PC-9 (cell line): ENCODE measurements at regions of chr3 and their contacts with region 1.

Region 1: DNA sequence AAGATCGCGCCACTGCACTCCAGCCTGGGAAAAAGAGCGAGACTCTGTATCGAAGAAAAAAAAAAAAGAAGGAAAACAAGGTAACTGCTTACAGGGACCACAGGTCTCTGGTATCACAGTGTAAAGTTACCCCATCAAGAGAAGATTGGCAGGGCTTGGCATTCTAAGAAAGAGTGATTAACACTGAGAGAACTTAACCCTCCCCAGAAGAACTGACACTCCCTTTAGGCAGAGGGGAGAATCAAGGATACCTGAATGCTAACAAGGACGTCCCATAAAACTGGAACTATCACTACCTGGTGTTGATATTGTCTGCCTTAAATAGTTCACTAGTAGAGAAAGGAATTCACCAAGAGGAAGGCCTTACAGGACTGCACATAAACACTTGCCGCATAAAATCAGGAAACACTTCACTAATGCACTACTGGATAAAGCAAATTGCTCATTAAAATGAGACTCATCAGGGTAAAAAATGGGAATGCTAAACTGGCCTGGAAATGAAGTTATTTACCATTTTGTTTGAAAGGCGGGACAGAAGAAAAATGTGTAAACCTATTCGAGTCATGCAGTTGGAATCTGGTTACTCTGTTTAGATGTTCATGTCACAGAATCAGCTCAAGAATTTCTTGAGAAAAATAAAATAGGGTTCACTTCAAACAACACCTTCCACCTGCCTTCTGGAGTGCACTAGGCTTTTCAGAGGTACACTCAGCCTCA is 121.6 kb downstream of the FOXP1 start:
- DNase-seq: peak; percentile 31 to 74
- H3K4me3 ChIP-seq: no peak overlapping the region; the same call in 1 of the 2 replicates
- H3K27ac ChIP-seq: peak overlapping the region; percentile 77
- H3K4me1 ChIP-seq: peaks cover 31% of the 10 kb centered on the region
- H3K27me3 ChIP-seq: no peaks in the 10 kb centered on the region
- CTCF ChIP-seq: no peak

Region 2: GRCh38 chr3:71451060-71451459 is 10.8 kb before region 1 on chr3:
- CTCF ChIA-PET with region 1: no interaction called
- POLR2A ChIA-PET with region 1: no interaction called
- intact Hi-C with region 1: no loop called
- DNase-seq: no peak
- H3K4me3 ChIP-seq: no peak overlapping the region
- H3K27ac ChIP-seq: no peak overlapping the region
- H3K4me1 ChIP-seq: peaks cover 16% of the 10 kb centered on the region
- H3K27me3 ChIP-seq: no peaks in the 10 kb centered on the region
- CTCF ChIP-seq: no peak

Region 3: GRCh38 chr3:71504250-71505036 is 42.5 kb after region 1 on chr3:
- CTCF ChIA-PET with region 1: no interaction called
- POLR2A ChIA-PET with region 1: no interaction called
- intact Hi-C with region 1: loop called (anchors 5 kb)
- DNase-seq: peak; percentile 43 to 70
- H3K4me3 ChIP-seq: peak overlapping the region; percentile 50
- H3K27ac ChIP-seq: peak overlapping the region; percentile 89
- H3K4me1 ChIP-seq: peaks cover 22% of the 10 kb centered on the region
- H3K27me3 ChIP-seq: no peaks in the 10 kb centered on the region
- CTCF ChIP-seq: no peak

Region 4: GRCh38 chr3:71784914-71785531 is 323.1 kb after region 1 on chr3 and contains the start of gene PROK2:
- CTCF ChIA-PET with region 1: no interaction called
- POLR2A ChIA-PET with region 1: no interaction called
- intact Hi-C with region 1: no loop called
- DNase-seq: no peak
- H3K4me3 ChIP-seq: no peak within 1 kb of the TSS
- H3K27ac ChIP-seq: no peak within 1 kb of the TSS
- H3K4me1 ChIP-seq: no peaks in the 10 kb centered on the region
- H3K27me3 ChIP-seq: no peaks in the 10 kb centered on the region
- CTCF ChIP-seq: no peak
- total RNA-seq, gene PROK2: not detected in 2 replicates